ENCODE measurements at regions of chr7 and their contacts with region 1.

Region 1: GRCh38 chr7:73342645-73343044 is 14.7 kb downstream of the FKBP6 start:
- DNase-seq: peak; percentile 33
- H3K4me3 ChIP-seq: no peak overlapping the region
- H3K27ac ChIP-seq: no peak overlapping the region
- H3K27me3 ChIP-seq: peaks cover 9% of the 10 kb centered on the region
- CTCF ChIP-seq: peak; percentile 76

Region 2: DNA sequence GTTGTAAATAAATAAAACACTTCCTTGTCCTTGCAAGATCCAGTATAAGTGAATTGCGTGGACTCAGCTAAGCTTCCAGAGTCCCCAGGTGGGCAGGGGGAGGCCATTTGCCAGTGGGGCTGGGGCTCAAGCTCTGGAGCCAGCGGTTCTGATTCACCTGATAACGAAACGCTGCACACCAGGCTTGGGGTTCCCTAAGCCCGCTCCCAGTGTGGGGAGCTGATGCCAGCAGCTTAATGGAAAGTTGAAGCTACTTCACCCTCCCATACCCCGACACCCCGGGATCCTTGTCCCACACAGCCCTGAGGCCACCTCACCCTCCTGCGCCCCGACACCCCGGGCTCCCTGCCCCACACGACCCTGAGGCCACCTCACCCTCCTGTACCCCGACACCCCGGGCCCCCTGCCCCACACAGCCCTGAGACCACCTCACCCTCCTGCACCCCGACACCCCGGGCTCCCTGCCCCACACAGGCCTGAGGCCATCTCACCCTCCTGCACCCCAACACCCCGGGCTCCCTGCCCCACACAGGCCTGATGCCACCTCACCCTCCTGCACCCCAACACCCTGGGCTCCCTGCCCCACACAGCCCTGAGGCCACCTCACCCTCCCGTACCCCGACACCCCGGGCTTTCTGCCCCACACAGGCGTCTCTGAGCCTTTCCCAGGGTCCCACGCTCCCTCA is 16.1 kb after region 1 on chr7:
- CTCF ChIA-PET with region 1: interaction called, 10 read pairs
- POLR2A ChIA-PET with region 1: no interaction called
- DNase-seq: no peak
- H3K4me3 ChIP-seq: no peak overlapping the region
- H3K27ac ChIP-seq: no peak overlapping the region
- H3K27me3 ChIP-seq: peaks cover 18% of the 10 kb centered on the region
- CTCF ChIP-seq: no peak